PC-9 (cell line): ENCODE measurements at regions of chr22 and their contacts with region 1.

Region 1: GRCh38 chr22:39731881-39732555 is 161.5 kb downstream of the CACNA1I start:
- DNase-seq: no peak
- H3K4me3 ChIP-seq: no peak overlapping the region
- H3K27ac ChIP-seq: no peak overlapping the region
- H3K4me1 ChIP-seq: no peaks in the 10 kb centered on the region
- H3K27me3 ChIP-seq: peaks cover 60% of the 10 kb centered on the region
- CTCF ChIP-seq: no peak

Region 2: DNA sequence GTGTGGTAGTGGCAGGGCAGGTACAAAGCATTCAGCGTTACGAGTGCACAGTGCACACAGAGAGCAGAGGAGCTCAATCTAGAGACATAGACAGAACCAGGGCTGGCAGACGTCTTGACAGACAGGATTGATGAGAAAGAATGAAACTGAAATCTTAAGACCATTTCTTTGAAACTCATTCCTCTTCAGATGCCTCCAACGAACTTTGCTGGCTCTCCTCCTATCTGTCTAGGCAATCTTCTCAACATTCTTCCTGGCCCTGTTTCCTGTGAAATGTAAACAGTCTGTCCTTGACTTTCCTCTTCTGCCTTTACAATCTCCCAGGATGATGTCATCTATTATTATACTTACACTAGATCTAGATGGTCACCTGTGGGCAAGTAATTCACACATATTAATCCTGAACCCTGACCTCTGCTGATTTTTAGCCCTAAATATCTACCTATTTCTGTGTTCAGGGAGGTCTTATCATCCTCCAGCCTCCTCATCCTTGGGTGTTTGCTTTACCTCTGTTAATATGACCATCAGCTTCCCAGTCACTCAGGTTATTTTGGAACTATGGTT is 42.0 kb after region 1 on chr22:
- CTCF ChIA-PET with region 1: no interaction called
- POLR2A ChIA-PET with region 1: no interaction called
- intact Hi-C with region 1: no loop called
- DNase-seq: peak; percentile 40 to 71
- H3K4me3 ChIP-seq: no peak overlapping the region
- H3K27ac ChIP-seq: no peak overlapping the region
- H3K4me1 ChIP-seq: peaks cover 12% of the 10 kb centered on the region
- H3K27me3 ChIP-seq: peaks cover 28% of the 10 kb centered on the region
- CTCF ChIP-seq: no peak

Region 3: DNA sequence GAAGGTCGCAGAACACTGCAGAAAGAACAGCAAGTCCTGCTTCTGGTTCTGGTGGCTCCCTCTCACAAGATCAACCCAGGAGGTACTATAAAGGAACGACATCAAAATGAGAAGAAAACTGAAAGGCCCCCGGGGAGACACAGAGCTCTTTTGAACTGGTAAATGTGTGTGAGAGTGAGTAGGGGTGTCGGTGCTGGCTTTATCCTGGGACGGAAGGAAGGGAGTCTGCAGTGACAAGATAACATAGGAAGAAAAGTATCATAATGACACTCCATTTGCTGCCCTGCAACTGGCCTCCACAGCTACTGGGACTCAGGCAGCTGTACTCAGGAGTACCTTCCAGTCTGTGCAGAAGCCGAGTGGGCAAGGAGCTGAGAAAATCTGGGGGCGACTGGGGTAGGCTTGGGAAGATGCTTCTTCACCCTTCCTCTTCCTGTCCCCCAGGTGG is 100.6 kb after region 1 on chr22:
- CTCF ChIA-PET with region 1: no interaction called
- POLR2A ChIA-PET with region 1: interaction called, 10 read pairs
- intact Hi-C with region 1: no loop called
- DNase-seq: no peak
- H3K4me3 ChIP-seq: no peak overlapping the region
- H3K27ac ChIP-seq: no peak overlapping the region
- H3K4me1 ChIP-seq: no peaks in the 10 kb centered on the region
- H3K27me3 ChIP-seq: peaks cover 57% of the 10 kb centered on the region
- CTCF ChIP-seq: no peak

Region 4: DNA sequence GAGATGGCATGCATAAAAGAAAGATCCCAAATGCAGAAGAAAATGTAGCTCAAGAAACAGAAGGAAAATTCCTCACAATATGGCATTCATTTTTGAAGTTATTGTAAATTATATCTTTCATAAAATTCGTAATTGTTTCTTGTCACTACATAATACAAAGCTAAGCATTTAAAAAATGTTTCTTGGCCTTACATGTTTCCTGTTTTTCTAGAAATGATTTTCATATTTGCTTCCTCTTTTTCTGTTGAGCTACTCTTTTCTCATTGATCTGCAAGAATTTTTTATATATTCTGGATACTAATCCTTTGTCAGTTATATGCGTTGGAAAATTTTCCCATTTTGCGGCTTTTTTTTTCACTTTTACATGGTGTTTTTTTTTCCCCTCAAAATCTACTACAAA is 113.5 kb after region 1 on chr22:
- CTCF ChIA-PET with region 1: interaction called, 12 read pairs
- POLR2A ChIA-PET with region 1: no interaction called
- intact Hi-C with region 1: no loop called
- DNase-seq: no peak
- H3K4me3 ChIP-seq: no peak overlapping the region
- H3K27ac ChIP-seq: no peak overlapping the region
- H3K4me1 ChIP-seq: no peaks in the 10 kb centered on the region
- H3K27me3 ChIP-seq: peaks cover 14% of the 10 kb centered on the region
- CTCF ChIP-seq: no peak

Region 5: GRCh38 chr22:39927544-39927943 is 195.5 kb after region 1 on chr22:
- CTCF ChIA-PET with region 1: no interaction called
- POLR2A ChIA-PET with region 1: no interaction called
- intact Hi-C with region 1: no loop called
- DNase-seq: no peak
- H3K4me3 ChIP-seq: no peak overlapping the region
- H3K27ac ChIP-seq: no peak overlapping the region
- H3K4me1 ChIP-seq: no peaks in the 10 kb centered on the region
- H3K27me3 ChIP-seq: peaks cover 93% of the 10 kb centered on the region
- CTCF ChIP-seq: no peak

Region 6: GRCh38 chr22:40107851-40108378 is 375.9 kb after region 1 on chr22:
- CTCF ChIA-PET with region 1: no interaction called
- POLR2A ChIA-PET with region 1: no interaction called
- intact Hi-C with region 1: no loop called
- DNase-seq: peak in 1 of 2 experiments; percentile 51
- H3K4me3 ChIP-seq: no peak overlapping the region
- H3K27ac ChIP-seq: no peak overlapping the region
- H3K4me1 ChIP-seq: no peaks in the 10 kb centered on the region
- H3K27me3 ChIP-seq: no peaks in the 10 kb centered on the region
- CTCF ChIP-seq: no peak